ENCODE measurements at regions of chr10 and their contacts with region 1.

Region 1: GRCh38 chr10:118116715-118117449 is 70.1 kb upstream of the RAB11FIP2 start:
- DNase-seq: no peak
- H3K4me3 ChIP-seq: no peak overlapping the region
- H3K27ac ChIP-seq: no peak overlapping the region
- H3K4me1 ChIP-seq: no peaks in the 10 kb centered on the region
- H3K27me3 ChIP-seq: peaks cover 4% of the 10 kb centered on the region
- CTCF ChIP-seq: no peak

Region 2: GRCh38 chr10:117960345-117960935 is 156.4 kb before region 1 on chr10:
- CTCF ChIA-PET with region 1: no interaction called
- dilution Hi-C with region 1: no loop called
- in situ Hi-C with region 1: no loop called
- intact Hi-C with region 1: no loop called
- DNase-seq: peak; percentile 8
- H3K4me3 ChIP-seq: no peak overlapping the region
- H3K27ac ChIP-seq: no peak overlapping the region
- H3K4me1 ChIP-seq: no peaks in the 10 kb centered on the region
- H3K27me3 ChIP-seq: no peaks in the 10 kb centered on the region
- CTCF ChIP-seq: no peak

Region 3: DNA sequence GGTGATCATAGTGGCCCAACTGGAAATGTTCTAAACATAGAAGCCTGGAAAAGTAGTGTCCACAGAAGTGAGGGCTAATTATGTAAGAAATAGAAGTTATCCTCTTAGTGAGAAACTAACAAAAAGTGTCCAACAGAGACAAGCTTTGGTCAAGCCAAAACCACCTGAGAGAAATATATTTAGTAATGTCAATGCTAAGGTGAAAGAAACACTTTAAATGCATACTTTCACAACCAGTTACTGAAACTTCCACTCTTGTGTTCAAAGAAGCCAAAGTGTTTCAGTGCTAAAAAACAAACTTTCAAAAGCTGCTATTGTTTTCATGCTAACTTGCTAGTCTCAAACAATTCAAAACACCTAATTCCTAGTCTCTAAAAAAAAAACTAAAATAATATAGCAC is 88.3 kb before region 1 on chr10:
- CTCF ChIA-PET with region 1: no interaction called
- dilution Hi-C with region 1: no loop called
- in situ Hi-C with region 1: no loop called
- intact Hi-C with region 1: no loop called
- DNase-seq: no peak
- H3K4me3 ChIP-seq: no peak overlapping the region
- H3K27ac ChIP-seq: no peak overlapping the region
- H3K4me1 ChIP-seq: no peaks in the 10 kb centered on the region
- H3K27me3 ChIP-seq: no peaks in the 10 kb centered on the region
- CTCF ChIP-seq: no peak

Region 4: DNA sequence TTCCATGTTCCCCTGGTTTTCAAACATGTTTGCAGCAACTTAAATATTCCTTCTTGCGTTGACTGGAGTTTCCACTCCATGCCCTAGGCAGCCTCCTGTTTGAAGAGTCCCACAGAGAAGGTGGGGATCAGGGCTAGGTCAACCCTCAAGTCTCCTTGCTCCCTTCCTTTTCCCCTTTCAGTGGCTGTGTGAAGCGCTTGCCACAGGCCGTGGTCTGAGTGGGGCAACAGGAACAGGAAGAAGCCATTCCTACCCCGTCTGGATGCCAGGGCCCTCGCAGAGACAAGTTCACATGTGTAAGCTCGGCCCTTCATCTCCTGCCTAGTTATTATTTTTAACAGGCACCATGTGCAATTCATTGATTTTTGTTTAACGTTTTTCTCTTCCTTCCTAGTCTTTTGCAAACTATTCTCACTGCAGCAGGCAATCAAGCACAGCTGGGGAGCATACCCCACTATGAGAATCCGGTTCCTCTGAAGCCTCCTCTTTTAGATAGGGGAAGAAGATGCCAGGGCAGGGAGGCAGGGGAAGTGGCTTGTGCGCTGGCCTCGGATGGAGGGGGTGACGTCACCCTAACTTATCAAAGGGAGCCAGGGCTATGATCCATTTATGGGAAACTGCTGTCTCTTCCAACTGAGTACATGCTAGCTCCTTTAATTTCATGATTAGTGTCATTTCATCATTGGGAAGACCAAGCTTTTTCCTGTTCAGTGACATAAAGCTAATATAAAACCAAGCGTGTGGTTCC is 414.4 kb after region 1 on chr10:
- CTCF ChIA-PET with region 1: no interaction called
- dilution Hi-C with region 1: no loop called
- in situ Hi-C with region 1: no loop called
- intact Hi-C with region 1: loop called (anchors 10 kb)
- DNase-seq: no peak
- H3K4me3 ChIP-seq: no peak overlapping the region
- H3K27ac ChIP-seq: no peak overlapping the region
- H3K4me1 ChIP-seq: peaks cover 4% of the 10 kb centered on the region
- H3K27me3 ChIP-seq: no peaks in the 10 kb centered on the region
- CTCF ChIP-seq: no peak

Measured in mammary epithelial cell (primary cell).